ENCODE measurements at regions of chr2 and their contacts with region 1.

Region 1: GRCh38 chr2:68467077-68467960 is at the starts of genes APLF and FBXO48:
- DNase-seq: peak; percentile 91 to 92
- H3K4me3 ChIP-seq: peak within 1 kb of the TSS; percentile 84 to 95 (median 94)
- H3K27ac ChIP-seq: peak within 1 kb of the TSS; percentile 90
- H3K4me1 ChIP-seq: no peaks in the 10 kb centered on the region; a peak in 1 of 7 replicates
- H3K27me3 ChIP-seq: no peaks in the 10 kb centered on the region
- CTCF ChIP-seq: no peak
- EP300 ChIP-seq: no peak
- POLR2A ChIP-seq: peak; percentile 80 to 85
- RAD21 ChIP-seq: no peak
- total RNA-seq, gene APLF: 4.4 and 4.9 TPM in 2 replicates
- total RNA-seq, gene FBXO48: 1.1 TPM in 2 replicates

Region 2: GRCh38 chr2:68411397-68412126 is 55.8 kb before region 1 on chr2:
- CTCF ChIA-PET with region 1: no interaction called
- POLR2A ChIA-PET with region 1: no interaction called
- DNase-seq: no peak
- H3K4me3 ChIP-seq: no peak overlapping the region
- H3K27ac ChIP-seq: no peak overlapping the region
- H3K4me1 ChIP-seq: no peaks in the 10 kb centered on the region
- H3K27me3 ChIP-seq: no peaks in the 10 kb centered on the region
- CTCF ChIP-seq: no peak
- EP300 ChIP-seq: no peak
- POLR2A ChIP-seq: no peak
- RAD21 ChIP-seq: no peak

Region 3: GRCh38 chr2:68452168-68452900 is 15.0 kb before region 1 on chr2:
- CTCF ChIA-PET with region 1: interaction called, 12 read pairs
- POLR2A ChIA-PET with region 1: no interaction called
- DNase-seq: no peak
- H3K4me3 ChIP-seq: no peak overlapping the region
- H3K27ac ChIP-seq: no peak overlapping the region
- H3K4me1 ChIP-seq: no peaks in the 10 kb centered on the region
- H3K27me3 ChIP-seq: no peaks in the 10 kb centered on the region
- CTCF ChIP-seq: no peak
- EP300 ChIP-seq: no peak
- POLR2A ChIP-seq: no peak
- RAD21 ChIP-seq: no peak

Region 4: DNA sequence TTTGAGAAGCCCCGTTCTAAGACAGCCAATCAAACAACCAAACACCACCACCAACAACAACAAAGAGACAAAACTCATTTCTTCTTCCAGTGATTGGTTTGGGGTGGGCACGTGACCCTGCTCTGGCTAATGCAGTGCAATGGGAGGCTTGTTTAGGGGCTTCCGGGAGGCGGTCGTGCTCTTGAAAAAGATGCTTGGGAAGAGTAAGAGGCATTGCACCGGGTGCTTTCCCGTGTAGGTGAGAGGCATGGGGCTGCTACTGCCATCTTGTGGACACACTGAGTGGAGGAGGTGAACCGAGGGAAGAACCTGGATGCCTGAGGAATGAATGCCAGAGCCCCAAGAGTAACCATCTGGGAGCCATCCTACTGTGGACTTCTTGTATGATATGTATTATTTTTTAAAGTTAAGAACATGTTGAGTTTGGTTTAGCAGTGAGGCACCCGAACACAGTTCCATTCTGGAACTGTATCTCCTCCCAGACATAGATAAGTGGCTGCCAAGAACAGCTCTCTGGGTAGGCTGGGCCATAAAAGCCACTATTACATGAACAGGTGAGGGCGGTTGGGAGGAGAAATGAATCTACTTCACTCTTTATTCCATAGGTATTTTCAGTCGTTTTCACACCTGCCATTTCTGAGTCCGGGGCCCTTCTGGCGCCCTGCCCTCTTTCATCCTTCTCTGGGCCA is 248.2 kb after region 1 on chr2:
- CTCF ChIA-PET with region 1: interaction called, 40 read pairs
- POLR2A ChIA-PET with region 1: no interaction called
- DNase-seq: peak; percentile 80 to 81
- H3K4me3 ChIP-seq: no peak overlapping the region
- H3K27ac ChIP-seq: no peak overlapping the region
- H3K4me1 ChIP-seq: no peaks in the 10 kb centered on the region
- H3K27me3 ChIP-seq: no peaks in the 10 kb centered on the region
- CTCF ChIP-seq: peak; percentile 84 to 90 (median 87)
- EP300 ChIP-seq: no peak
- POLR2A ChIP-seq: no peak
- RAD21 ChIP-seq: peak; percentile 81 to 85

Region 5: DNA sequence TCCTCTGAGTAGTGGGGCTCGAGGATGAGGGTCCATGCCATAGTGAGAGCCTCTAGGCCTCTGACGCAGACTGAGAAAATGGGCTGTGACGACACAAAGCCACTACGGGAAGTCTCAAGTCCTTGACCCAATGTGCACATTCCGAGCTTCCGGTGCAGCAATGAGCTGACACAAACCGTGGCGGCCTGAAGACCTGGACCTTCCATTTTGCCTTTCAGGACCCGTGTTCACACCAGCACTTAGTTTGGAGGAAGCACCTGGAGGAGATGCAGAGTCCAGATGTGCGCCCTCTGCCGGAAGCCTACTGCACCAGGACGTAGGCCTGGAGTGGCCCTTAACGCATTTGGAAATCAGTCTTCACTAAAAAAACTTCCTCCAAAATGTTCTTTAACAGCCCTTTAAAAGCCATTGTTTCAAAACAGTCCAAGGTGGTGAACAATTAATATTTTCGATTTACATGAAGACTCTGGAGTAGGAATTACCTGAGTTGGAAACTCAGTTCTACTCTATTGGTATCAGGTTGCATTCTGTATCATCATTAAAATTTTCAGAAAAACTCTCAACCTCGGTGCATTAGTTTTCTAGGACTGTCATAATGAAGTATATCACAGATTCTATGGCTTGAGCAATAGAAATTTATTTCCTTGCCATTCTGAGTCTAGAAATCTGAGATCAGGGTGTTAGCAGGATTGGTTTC is 370.0 kb after region 1 on chr2:
- CTCF ChIA-PET with region 1: interaction called, 18 read pairs
- POLR2A ChIA-PET with region 1: no interaction called
- DNase-seq: peak; percentile 38 to 84
- H3K4me3 ChIP-seq: no peak overlapping the region
- H3K27ac ChIP-seq: no peak overlapping the region
- H3K4me1 ChIP-seq: no peaks in the 10 kb centered on the region
- H3K27me3 ChIP-seq: no peaks in the 10 kb centered on the region
- CTCF ChIP-seq: peak; percentile 78 to 91 (median 85)
- EP300 ChIP-seq: no peak
- POLR2A ChIP-seq: no peak
- RAD21 ChIP-seq: peak; percentile 62 to 75

Region 6: DNA sequence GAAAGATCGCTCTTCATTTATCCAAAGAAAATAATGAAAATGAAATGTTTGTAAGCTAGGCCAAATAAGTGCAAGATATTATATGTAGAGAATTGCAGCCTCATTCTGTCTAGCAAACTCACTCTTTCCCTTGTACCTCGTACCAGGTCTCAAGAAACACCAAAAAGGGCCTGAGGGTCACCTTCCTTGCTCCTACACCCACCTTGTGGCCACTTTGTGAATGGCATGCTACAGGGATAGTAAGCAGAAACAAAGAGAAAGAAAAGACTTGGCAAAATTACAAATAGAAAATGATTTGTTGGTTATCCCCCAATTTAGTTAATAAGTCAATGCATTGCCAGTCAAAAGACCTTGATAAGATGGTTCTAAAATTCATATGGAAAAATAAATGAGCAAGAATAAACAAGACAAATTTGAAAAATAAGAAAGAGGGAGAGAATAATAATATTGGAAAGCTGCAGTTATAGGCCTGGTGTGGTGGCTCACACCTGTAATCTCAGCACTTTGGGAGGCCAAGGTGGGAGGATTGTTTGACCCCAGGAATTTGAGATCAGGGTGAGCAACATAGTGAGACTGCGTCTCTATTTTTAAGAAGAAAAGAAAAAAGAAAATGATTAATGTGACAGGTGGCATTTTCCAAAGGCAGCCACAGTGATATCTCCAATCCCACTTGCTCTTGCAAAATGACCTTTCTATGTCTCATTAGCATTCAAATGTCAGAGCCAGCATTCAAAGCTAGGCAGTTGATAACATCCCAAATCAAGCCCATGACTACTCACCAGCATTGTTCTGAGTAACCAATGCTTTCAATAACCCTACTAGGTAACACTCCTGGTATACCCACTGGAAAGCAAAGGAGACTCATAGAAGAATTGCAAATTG is 442.7 kb after region 1 on chr2:
- CTCF ChIA-PET with region 1: interaction called, 10 read pairs
- POLR2A ChIA-PET with region 1: interaction called, 4 read pairs
- DNase-seq: peak in 1 of 2 experiments; percentile 80
- H3K4me3 ChIP-seq: no peak overlapping the region
- H3K27ac ChIP-seq: no peak overlapping the region
- H3K4me1 ChIP-seq: peaks cover 0 to 7% (median 4%) of the 10 kb centered on the region in 4 experiments; a peak in 4 of 7 replicates
- H3K27me3 ChIP-seq: no peaks in the 10 kb centered on the region
- CTCF ChIP-seq: peak; percentile 54 to 77 (median 62)
- EP300 ChIP-seq: no peak
- POLR2A ChIP-seq: no peak
- RAD21 ChIP-seq: peak; percentile 77 to 78

Region 7: GRCh38 chr2:68943581-68944568 is 476.6 kb after region 1 on chr2:
- CTCF ChIA-PET with region 1: interaction called, 13 read pairs
- POLR2A ChIA-PET with region 1: no interaction called
- DNase-seq: peak in 1 of 2 experiments; percentile 88
- H3K4me3 ChIP-seq: peak overlapping the region; percentile 42 to 60 (median 50); a peak in 6 of 8 replicates
- H3K27ac ChIP-seq: no peak overlapping the region
- H3K4me1 ChIP-seq: peaks cover 0 to 6% (median 5%) of the 10 kb centered on the region in 4 experiments; a peak in 3 of 7 replicates
- H3K27me3 ChIP-seq: no peaks in the 10 kb centered on the region
- CTCF ChIP-seq: peak; percentile 17 to 76 (median 76)
- EP300 ChIP-seq: no peak
- POLR2A ChIP-seq: no peak
- RAD21 ChIP-seq: peak; percentile 56 to 79